Breast epithelium (tissue), 4 donors: ENCODE measurements at regions of chrX and their contacts with region 1.

Region 1: GRCh38 chrX:152619897-152620296 is 17.8 kb upstream of the GABRQ start:
- DNase-seq: no peak
- H3K4me3 ChIP-seq: no peak overlapping the region
- H3K27ac ChIP-seq: no peak overlapping the region
- H3K4me1 ChIP-seq: no peaks in the 10 kb centered on the region
- H3K27me3 ChIP-seq: peaks cover 0 to 28% of the 10 kb centered on the region in 2 donors
- CTCF ChIP-seq: no peak
- POLR2A ChIP-seq: no peak

Region 2: DNA sequence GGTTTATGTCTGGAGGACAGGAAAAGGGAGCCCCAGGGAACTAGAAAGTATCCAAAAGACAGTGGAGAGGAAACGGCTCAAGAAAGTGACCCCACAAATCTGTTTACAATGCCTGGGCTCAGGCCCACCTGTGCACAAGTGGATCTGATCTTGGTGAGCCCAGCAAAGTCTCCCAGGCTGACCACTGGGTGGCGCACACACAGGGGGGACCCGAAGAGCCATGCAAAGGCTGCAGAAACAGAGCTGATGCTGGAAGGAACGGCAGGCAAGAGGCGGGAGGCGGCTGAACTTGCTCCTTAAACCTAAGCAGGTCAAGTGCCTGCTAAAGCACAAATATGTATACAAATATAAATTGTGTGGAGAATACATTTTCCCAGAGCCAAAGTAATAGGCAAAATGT is 840.9 kb after region 1 on chrX:
- intact Hi-C with region 1: loop called (anchors 5 kb)
- DNase-seq: no peak
- H3K4me3 ChIP-seq: no peak overlapping the region
- H3K27ac ChIP-seq: no peak overlapping the region
- H3K4me1 ChIP-seq: no peaks in the 10 kb centered on the region
- H3K27me3 ChIP-seq: peaks cover 0 to 50% of the 10 kb centered on the region in 2 donors
- CTCF ChIP-seq: peak in 2 of 3 donors; percentile 19 to 24
- POLR2A ChIP-seq: no peak